Calu3 (cell line): ENCODE measurements at regions of chr5 and their contacts with region 1.

Region 1: GRCh38 chr5:139787568-139788293 is 7.9 kb upstream of the PSD2 start:
- DNase-seq: peak; percentile 96
- H3K4me3 Mint-ChIP-seq: peak overlapping the region; percentile 68
- H3K27ac Mint-ChIP-seq: no peak overlapping the region
- H3K4me1 Mint-ChIP-seq: no peaks in the 10 kb centered on the region
- H3K27me3 Mint-ChIP-seq: peaks cover 75% of the 10 kb centered on the region
- CTCF ChIP-seq: peak; percentile 93

Region 2: GRCh38 chr5:139844472-139845145 is 56.9 kb after region 1 on chr5:
- CTCF ChIA-PET with region 1: interaction called, 10 read pairs
- intact Hi-C with region 1: loop called (anchors 1 kb)
- DNase-seq: peak; percentile 90
- H3K4me3 Mint-ChIP-seq: no peak overlapping the region
- H3K27ac Mint-ChIP-seq: no peak overlapping the region
- H3K4me1 Mint-ChIP-seq: peaks cover 4% of the 10 kb centered on the region
- H3K27me3 Mint-ChIP-seq: peaks cover 92% of the 10 kb centered on the region
- CTCF ChIP-seq: peak; percentile 87

Region 3: DNA sequence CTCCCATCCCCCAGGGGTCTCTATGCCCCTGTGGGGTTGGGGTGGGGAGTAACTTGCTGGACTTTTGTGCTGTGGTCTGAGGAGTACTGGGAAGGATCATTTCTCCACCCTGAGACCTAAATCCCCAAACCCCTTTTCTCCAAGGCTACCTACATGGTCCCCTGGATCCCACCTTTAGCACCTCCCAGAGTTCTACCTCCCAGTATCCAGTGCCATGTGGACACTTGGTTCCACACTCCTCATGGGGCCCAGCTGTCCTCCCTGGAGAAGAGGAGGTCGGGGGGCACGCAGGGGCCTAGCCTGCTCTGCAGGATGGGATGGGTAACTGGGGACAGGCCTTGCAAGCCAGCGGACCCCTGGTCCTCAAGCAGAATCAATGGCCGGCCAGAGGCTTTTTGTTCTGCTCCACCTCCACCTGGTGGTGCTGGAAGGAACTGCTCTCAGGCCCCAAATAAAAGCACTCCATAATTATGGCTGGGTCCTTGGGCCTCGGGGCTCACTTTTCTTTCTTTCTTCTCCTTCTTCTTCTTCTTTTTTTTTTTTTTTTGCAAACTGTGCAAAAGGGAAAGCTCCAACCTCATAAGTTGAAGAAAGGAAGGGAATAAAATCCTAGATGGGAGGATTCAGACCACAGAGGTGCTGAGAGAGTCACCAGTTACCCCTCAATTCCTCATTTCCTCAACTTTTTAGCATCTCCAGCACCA is 76.3 kb after region 1 on chr5:
- CTCF ChIA-PET with region 1: interaction called, 14 read pairs
- intact Hi-C with region 1: loop called (anchors 1 kb)
- DNase-seq: peak; percentile 80
- H3K4me3 Mint-ChIP-seq: no peak overlapping the region
- H3K27ac Mint-ChIP-seq: no peak overlapping the region
- H3K4me1 Mint-ChIP-seq: no peaks in the 10 kb centered on the region
- H3K27me3 Mint-ChIP-seq: peaks cover 60% of the 10 kb centered on the region
- CTCF ChIP-seq: peak; percentile 94

Region 4: GRCh38 chr5:140157032-140157803 is 369.5 kb after region 1 on chr5:
- CTCF ChIA-PET with region 1: no interaction called
- intact Hi-C with region 1: loop called (anchors 2 kb)
- DNase-seq: peak; percentile 94
- H3K4me3 Mint-ChIP-seq: peak overlapping the region; percentile 64
- H3K27ac Mint-ChIP-seq: peak overlapping the region; percentile 59
- H3K4me1 Mint-ChIP-seq: peaks cover 4% of the 10 kb centered on the region
- H3K27me3 Mint-ChIP-seq: no peaks in the 10 kb centered on the region
- CTCF ChIP-seq: peak; percentile 92